ENCODE measurements at regions of chr17 and their contacts with region 1.

Region 1: DNA sequence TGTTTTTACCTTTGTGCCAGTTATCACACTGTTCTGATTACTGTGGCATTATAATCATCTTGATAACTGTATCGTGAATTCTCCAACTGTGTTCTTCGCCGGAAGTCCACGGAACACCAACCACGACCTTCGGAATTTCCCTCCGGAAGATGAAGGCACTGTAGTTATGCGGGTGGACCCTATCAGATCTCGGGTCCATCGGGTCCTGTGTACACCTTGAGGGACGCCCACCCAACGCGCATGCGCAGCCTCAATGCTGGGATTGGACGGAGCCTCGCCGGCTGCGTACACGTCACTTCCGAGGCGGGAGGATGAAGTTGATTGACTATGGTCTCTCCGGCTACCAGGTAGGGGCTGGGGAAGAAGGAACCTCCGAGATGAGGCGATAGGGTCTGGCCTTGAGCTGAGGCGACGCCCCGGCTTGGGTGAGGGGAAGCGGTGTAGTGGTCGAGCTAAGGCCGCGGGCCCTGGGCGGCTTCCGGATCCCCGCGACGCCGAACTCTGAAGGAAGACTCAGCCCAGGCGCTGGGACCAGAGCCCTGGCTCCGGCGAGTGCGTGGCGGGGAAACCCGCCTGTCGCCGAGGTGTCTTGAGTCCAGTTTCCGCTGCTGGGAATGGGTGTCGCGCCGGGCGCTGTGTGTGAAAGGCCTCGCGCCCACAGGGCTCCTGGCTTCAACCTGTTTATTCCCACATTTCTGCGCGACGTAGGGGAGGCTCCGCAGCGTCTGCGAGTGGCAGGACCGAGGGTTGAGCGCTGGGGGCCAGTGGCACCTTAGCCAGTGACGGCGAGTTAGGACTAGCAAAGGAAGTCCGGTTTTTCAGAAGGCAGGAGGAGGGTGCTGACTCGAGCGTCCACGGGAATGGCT is at the start of gene DHRS7B:
- DNase-seq: peak; percentile 94 to 99
- H3K4me3 ChIP-seq: peak within 1 kb of the TSS; percentile 84
- CTCF ChIP-seq: no peak
- POLR2A ChIP-seq: no peak
- total RNA-seq, gene DHRS7B: 35.2 to 59.4 (median 39.6) TPM

Region 2: GRCh38 chr17:21214015-21214776 is 87.3 kb after region 1 on chr17 and contains the start of gene TMEM11:
- intact Hi-C with region 1: loop called (anchors 10 kb)
- DNase-seq: peak; percentile 94 to 99
- H3K4me3 ChIP-seq: peak within 1 kb of the TSS; percentile 72
- CTCF ChIP-seq: no peak
- POLR2A ChIP-seq: no peak
- total RNA-seq, gene TMEM11: 30.0 to 43.5 (median 37.0) TPM

Region 3: GRCh38 chr17:21511363-21512198 is 384.7 kb after region 1 on chr17:
- intact Hi-C with region 1: loop called (anchors 10 kb)
- DNase-seq: peak; percentile 74 to 96
- H3K4me3 ChIP-seq: peak overlapping the region; percentile 35
- CTCF ChIP-seq: peak in 1 of 3 donors; percentile 48
- POLR2A ChIP-seq: no peak

Measured in lower leg skin (tissue), 4 donors.